Heart right ventricle (tissue), 16 donors: ENCODE measurements at regions of chr12 and their contacts with region 1.

Region 1: GRCh38 chr12:19915392-19916195 is 452.7 kb upstream of the PDE3A start:
- DNase-seq: peak in 1 of 2 donors; percentile 26
- ATAC-seq: peak in 7 of 8 donors; percentile 62 to 84 (median 79)
- H3K4me3 ChIP-seq: no peak overlapping the region
- H3K27ac ChIP-seq: peak overlapping the region in 8 of 10 donors; percentile 11 to 67 (median 25)
- H3K4me1 ChIP-seq: peaks cover 0 to 19% (median 7%) of the 10 kb centered on the region in 9 donors
- H3K27me3 ChIP-seq: no peaks in the 10 kb centered on the region
- CTCF ChIP-seq: peak; percentile 36 to 70 (median 62)

Region 2: GRCh38 chr12:19946549-19946948 is 31.0 kb after region 1 on chr12:
- intact Hi-C with region 1: loop called in 1 of 10 experiments (anchors 1 kb)
- DNase-seq: no peak
- ATAC-seq: peak; percentile 44 to 87 (median 74)
- H3K4me3 ChIP-seq: no peak overlapping the region
- H3K27ac ChIP-seq: peak overlapping the region in 7 of 10 donors; percentile 32 to 77 (median 39)
- H3K4me1 ChIP-seq: peaks cover 0 to 20% (median 10%) of the 10 kb centered on the region in 9 donors
- H3K27me3 ChIP-seq: no peaks in the 10 kb centered on the region
- CTCF ChIP-seq: no peak

Region 3: DNA sequence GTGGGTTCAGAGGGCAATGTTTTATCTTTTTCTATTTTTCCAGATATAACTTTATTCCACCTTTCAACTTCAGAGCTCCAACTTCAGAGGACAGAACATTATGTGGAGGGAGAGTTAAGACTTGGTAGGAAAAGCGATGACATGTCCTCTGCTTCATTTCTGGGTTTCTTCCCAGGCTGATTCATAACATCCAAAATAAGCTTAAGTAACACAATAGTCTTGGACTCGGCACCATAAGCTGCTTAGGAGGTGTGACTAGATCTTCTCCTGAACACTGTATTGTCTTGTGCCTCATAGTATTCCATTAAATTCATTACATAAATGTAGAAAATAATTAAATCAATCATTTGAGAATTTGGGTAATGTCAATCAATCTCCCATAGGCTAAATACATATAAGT is 357.2 kb after region 1 on chr12:
- intact Hi-C with region 1: loop called in 1 of 10 experiments (anchors 10 kb)
- DNase-seq: no peak
- ATAC-seq: peak; percentile 59 to 87 (median 79)
- H3K4me3 ChIP-seq: no peak overlapping the region
- H3K27ac ChIP-seq: peak overlapping the region; percentile 45 to 79 (median 67)
- H3K4me1 ChIP-seq: peaks cover 0 to 50% (median 18%) of the 10 kb centered on the region in 9 donors
- H3K27me3 ChIP-seq: no peaks in the 10 kb centered on the region
- CTCF ChIP-seq: no peak

Region 4: DNA sequence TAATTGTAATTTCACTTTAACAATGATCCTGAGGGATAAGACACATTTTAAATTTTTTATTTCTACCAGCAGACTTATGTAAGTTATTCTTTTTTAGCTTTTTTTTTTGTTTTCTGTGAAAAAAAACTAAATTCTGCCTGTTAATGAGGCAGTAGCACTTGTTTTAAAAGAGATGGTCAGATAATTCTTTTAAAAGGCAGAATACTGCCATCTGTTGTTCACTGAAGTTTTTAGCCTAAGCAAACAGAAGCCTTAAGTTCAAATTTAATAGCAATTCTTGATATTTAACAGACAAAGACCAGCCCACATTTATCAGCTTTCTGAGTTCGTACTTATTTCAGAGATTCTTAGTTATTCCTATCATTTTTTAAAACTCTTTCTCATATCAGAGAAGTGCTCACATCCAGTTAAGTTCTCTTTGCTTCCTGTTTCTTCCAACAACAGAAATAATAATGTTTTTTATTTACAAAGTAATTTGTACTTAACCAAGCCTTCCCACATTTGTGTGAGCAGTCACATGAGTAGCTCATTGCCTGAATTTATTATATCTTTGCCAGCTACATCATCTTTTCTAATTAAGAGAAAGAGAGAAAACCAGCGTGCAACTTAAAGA is 686.2 kb after region 1 on chr12:
- intact Hi-C with region 1: loop called in 1 of 10 experiments (anchors 10 kb)
- DNase-seq: no peak
- ATAC-seq: peak in 2 of 8 donors; percentile 32 to 52
- H3K4me3 ChIP-seq: no peak overlapping the region
- H3K27ac ChIP-seq: peak overlapping the region in 8 of 10 donors; percentile 39 to 73 (median 57)
- H3K4me1 ChIP-seq: peaks cover 0 to 59% (median 12%) of the 10 kb centered on the region in 9 donors
- H3K27me3 ChIP-seq: no peaks in the 10 kb centered on the region
- CTCF ChIP-seq: peak in 8 of 9 donors; percentile 13 to 64 (median 52)

Region 5: GRCh38 chr12:20624718-20625117 is 709.1 kb after region 1 on chr12:
- intact Hi-C with region 1: loop called in 2 of 10 experiments (anchors 10 kb)
- DNase-seq: no peak
- ATAC-seq: no peak
- H3K4me3 ChIP-seq: no peak overlapping the region
- H3K27ac ChIP-seq: no peak overlapping the region
- H3K4me1 ChIP-seq: peaks cover 3 to 30% (median 18%) of the 10 kb centered on the region in 9 donors
- H3K27me3 ChIP-seq: no peaks in the 10 kb centered on the region
- CTCF ChIP-seq: peak in 8 of 9 donors; percentile 11 to 53 (median 35)